MCF 10A (cell line): ENCODE measurements at regions of chr5 and their contacts with region 1.

Region 1: GRCh38 chr5:33440482-33441240 is at the start of gene TARS1:
- DNase-seq: peak; percentile 100
- H3K4me3 Mint-ChIP-seq: no peak within 1 kb of the TSS
- H3K27ac Mint-ChIP-seq: no peak within 1 kb of the TSS
- H3K4me1 Mint-ChIP-seq: peaks cover 30% of the 10 kb centered on the region
- H3K27me3 Mint-ChIP-seq: no peaks in the 10 kb centered on the region
- CTCF ChIP-seq: no peak
- total RNA-seq, gene TARS1: 386 and 469 TPM in 2 replicates

Region 2: DNA sequence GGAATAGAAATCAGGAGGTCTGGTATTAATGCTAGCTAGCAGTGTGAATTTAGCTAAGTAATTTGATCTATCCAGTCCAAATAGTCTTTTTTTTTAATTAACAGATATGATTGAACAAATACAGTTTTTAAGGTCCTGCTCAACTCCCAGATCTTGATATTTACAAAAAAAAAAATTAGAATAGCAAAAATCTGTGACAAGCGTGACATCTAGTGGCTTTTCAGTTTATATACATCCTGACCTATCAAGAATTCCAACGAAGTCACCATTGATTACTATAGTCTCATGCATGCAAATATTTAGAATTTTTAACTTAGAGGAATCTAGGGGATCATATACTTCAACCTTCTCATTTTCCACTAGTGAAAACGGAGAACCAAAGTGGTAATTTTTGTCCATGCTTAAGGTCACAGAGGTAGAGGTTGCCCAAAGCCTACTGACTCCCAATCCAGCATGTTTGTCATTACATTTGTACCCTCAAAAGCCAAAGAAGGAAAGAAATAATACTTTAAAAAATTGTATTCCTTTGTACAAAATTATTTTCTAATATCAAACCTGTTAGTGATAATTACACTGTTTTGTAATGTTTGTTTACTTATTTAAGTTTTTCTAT is 17.5 kb before region 1 on chr5:
- CTCF ChIA-PET with region 1: interaction called, 12 read pairs
- POLR2A ChIA-PET with region 1: interaction called, 3 read pairs
- intact Hi-C with region 1: no loop called
- DNase-seq: peak; percentile 49
- H3K4me3 Mint-ChIP-seq: no peak overlapping the region
- H3K27ac Mint-ChIP-seq: no peak overlapping the region
- H3K4me1 Mint-ChIP-seq: no peaks in the 10 kb centered on the region
- H3K27me3 Mint-ChIP-seq: no peaks in the 10 kb centered on the region
- CTCF ChIP-seq: peak; percentile 62

Region 3: GRCh38 chr5:33936004-33936380 is 495.3 kb after region 1 on chr5:
- CTCF ChIA-PET with region 1: interaction called, 72 read pairs
- POLR2A ChIA-PET with region 1: interaction called, 6 read pairs
- intact Hi-C with region 1: loop called (anchors 1 kb)
- DNase-seq: no peak
- H3K4me3 Mint-ChIP-seq: no peak overlapping the region
- H3K27ac Mint-ChIP-seq: no peak overlapping the region
- H3K4me1 Mint-ChIP-seq: peaks cover 7% of the 10 kb centered on the region
- H3K27me3 Mint-ChIP-seq: peaks cover 40% of the 10 kb centered on the region
- CTCF ChIP-seq: no peak

Region 4: DNA sequence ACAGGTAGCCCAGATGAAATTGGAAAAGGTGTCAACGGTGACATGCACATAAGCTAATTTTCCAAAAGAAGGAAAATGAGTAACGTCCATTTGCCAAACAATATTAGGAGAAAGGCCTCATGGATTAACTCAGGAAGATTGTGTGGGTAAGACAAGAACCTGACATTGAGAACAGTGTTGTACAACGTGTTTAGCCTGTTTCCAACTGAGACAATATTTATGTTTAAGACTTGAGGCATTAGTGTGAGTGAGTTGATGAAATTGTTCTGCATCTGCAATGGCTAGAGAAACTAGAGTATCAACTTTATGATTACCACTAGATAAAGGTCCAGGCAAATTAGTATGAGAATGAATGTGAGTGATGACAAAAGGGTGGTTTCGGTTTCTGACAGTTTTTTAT is 1024.2 kb after region 1 on chr5:
- CTCF ChIA-PET with region 1: no interaction called
- POLR2A ChIA-PET with region 1: no interaction called
- intact Hi-C with region 1: loop called (anchors 5 kb)
- DNase-seq: no peak
- H3K4me3 Mint-ChIP-seq: no peak overlapping the region
- H3K27ac Mint-ChIP-seq: no peak overlapping the region
- H3K4me1 Mint-ChIP-seq: peaks cover 11% of the 10 kb centered on the region
- H3K27me3 Mint-ChIP-seq: peaks cover 17% of the 10 kb centered on the region
- CTCF ChIP-seq: no peak